ENCODE measurements at regions of chr6 and their contacts with region 1.

Region 1: DNA sequence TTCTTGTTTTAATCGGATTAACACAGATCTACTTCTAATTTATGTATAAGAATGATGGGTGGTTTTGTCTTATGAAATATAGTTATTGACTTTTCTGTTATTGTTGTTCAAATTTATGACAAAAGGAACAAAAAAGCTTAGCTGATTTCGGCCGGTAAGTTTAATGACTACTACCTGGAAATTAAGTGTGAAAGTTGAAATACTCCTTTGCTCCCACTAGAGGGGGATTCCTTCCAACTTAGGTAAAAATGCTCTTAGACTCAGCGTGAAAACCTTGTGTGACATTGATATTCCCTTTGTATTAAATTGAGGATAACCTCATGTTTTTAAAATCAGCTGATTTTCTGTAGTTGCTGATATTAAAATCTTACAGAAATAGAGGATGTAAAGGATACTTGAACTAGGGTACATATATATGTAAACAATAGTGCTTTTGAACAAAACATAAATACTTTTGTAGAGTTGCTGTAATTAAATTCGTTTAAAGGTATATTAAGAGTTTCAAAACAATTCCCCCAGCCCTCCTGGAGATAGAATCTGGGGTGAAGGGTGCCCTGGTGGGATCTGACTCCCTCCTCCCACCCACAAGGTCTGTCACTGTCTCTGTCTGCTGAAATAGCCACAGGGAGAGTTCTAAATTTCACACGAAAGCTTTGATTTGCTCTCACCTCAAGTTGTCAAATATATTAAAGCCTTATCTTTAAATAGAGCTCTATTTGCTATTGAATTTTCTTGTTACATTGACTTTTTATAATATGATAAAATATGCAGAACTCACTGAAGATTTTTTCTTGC is 257.5 kb downstream of the ARID1B start:
- DNase-seq: no peak
- H3K4me3 ChIP-seq: no peak overlapping the region
- H3K27ac ChIP-seq: peak overlapping the region in 3 of 4 donors; percentile 65 to 80 (median 74)
- H3K4me1 ChIP-seq: peaks cover 4 to 42% (median 15%) of the 10 kb centered on the region in 4 donors
- H3K27me3 ChIP-seq: no peaks in the 10 kb centered on the region
- CTCF ChIP-seq: peak; percentile 60 to 79 (median 65)
- EP300 ChIP-seq: no peak
- POLR2A ChIP-seq: no peak

Region 2: DNA sequence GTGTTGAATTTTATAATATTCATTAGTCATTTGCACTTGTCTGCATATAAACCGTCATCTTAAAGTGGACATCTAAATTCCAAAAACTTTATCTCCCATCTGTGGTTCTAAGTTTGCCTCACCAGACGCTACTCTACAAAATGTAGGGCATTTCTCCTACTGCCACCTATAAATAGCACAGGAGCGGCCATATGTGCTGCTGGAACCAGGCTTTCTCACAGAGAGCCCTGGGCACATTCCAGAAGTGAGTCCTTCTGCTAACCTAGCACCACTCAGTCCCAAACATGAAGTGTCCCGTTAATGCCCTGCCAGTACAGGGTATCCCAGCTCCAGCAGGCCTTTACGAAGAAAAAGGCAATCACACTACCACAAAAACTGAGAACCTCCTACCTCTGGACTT is 135.0 kb after region 1 on chr6:
- in situ Hi-C with region 1: no loop called
- intact Hi-C with region 1: no loop called
- DNase-seq: no peak
- H3K4me3 ChIP-seq: no peak overlapping the region
- H3K27ac ChIP-seq: peak overlapping the region in 1 of 4 donors; percentile 2
- H3K4me1 ChIP-seq: no peaks in the 10 kb centered on the region
- H3K27me3 ChIP-seq: no peaks in the 10 kb centered on the region
- CTCF ChIP-seq: no peak
- EP300 ChIP-seq: no peak
- POLR2A ChIP-seq: no peak

Region 3: DNA sequence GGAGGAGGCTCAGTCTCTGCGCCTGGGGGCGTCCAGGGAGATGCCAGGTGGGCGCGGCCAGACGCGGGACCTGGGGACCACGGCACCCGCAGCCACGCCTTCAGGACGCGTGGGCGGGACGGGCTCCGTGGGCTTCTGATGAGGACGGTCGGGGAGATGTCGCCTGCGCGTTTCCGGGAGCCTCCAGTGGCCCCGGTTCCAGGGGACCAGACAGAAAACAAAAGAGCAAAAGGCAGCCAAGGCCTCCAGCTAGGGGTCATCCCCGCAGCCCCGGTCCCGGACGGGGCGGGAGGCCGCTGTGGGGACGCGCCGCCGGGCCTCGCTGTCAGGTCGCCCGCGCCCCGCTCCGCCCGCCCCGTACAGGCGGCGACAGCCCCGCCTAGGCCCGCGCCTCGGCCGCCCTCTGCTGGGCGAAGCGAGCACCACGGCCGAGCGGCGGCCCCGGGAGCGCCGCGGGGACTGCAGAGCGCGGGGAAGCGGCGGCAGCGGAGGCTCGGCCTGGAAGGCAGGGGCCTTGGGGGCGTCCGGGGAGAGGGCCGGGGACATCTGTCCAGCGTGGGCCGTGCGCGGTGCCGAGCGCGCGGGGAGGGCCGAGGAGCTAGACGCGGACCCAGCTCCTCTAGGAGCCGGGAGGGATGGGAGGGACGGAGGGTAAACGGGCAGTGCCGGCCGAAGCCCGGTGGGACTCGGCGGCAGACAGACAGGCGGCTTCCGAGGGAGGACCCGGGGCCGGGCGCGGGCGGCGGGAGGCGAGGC is 240.0 kb after region 1 on chr6:
- in situ Hi-C with region 1: loop called in 1 of 4 experiments (anchors 10 kb)
- intact Hi-C with region 1: loop called (anchors 5 kb)
- DNase-seq: peak; percentile 80
- H3K4me3 ChIP-seq: peak overlapping the region; percentile 57 to 71 (median 62)
- H3K27ac ChIP-seq: peak overlapping the region; percentile 76 to 86 (median 80)
- H3K4me1 ChIP-seq: peaks cover 2 to 16% (median 10%) of the 10 kb centered on the region in 4 donors
- H3K27me3 ChIP-seq: no peaks in the 10 kb centered on the region
- CTCF ChIP-seq: peak; percentile 11 to 78 (median 74)
- EP300 ChIP-seq: no peak
- POLR2A ChIP-seq: peak; percentile 14

Measured in transverse colon (tissue), 4 donors.